Psoas muscle (tissue), 8 donors: ENCODE measurements at regions of chr20 and their contacts with region 1.

Region 1: GRCh38 chr20:32652739-32653526 is 20.8 kb downstream of the C20orf203 start:
- DNase-seq: peak; percentile 80 to 89
- ATAC-seq: peak; percentile 90 to 97 (median 96)
- H3K4me3 ChIP-seq: no peak overlapping the region
- H3K27ac ChIP-seq: no peak overlapping the region
- H3K4me1 ChIP-seq: no peaks in the 10 kb centered on the region
- H3K27me3 ChIP-seq: no peaks in the 10 kb centered on the region
- CTCF ChIP-seq: peak; percentile 94

Region 2: DNA sequence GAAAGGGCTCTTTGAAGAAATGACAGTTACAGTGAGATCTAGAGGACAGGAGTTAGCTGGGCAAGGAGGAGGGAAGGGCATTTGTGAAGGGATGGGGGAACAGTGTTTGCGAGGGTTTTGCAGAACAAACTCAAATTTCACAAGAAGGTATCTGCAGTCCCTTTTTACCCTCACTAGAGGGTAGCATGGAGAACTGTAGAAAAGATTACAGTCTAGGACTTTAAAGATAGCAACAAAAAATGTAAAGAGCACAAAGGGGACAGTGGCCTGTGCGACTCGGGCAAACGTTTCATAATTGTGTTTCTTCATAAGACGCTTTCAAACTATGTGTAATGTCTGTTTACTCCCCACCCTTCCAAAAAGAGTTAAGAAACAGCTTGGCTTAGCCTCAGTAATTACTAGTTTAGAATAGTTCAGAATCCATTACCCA is 316.0 kb before region 1 on chr20:
- intact Hi-C with region 1: no loop called
- DNase-seq: no peak
- ATAC-seq: peak in 3 of 4 donors; percentile 42 to 60 (median 51)
- H3K4me3 ChIP-seq: no peak overlapping the region
- H3K27ac ChIP-seq: no peak overlapping the region
- H3K4me1 ChIP-seq: peaks cover 8% of the 10 kb centered on the region
- H3K27me3 ChIP-seq: no peaks in the 10 kb centered on the region
- CTCF ChIP-seq: peak; percentile 48

Region 3: DNA sequence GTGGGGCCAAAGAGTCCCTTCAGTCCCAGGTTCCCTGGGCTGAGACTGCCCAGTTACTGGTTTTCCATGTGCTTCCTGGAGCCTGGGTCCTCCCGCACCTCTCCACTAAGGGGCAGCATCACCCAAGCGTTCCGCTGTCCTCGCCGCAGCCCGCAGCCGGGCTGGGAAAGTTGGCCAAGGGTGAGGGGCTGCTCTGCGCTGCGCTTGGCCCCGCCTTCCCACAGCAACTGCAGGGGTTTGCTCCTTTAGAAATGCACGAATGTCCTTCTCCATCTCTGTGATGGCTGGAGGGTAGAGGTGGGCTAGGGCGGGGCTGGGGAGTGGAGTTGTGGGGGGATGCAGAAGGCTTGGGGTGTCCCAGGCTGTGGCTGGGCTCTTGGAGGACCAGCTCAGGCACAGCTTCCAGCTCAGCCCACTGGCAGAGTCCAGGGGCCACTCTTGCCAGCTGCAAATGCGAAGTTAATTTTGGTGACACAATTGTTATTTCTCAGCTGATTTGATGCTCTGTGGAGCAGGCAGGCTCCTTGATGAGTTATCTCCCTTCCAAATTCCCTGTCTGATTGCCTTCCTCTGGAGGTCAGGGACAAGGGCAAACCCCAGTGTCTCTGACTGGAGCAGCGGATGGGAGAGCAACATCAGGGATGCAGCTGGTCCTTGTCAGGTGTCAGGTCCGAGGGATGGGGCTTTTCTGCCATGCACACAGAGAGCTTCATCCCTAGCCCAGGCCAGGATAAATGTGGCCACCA is 131.0 kb before region 1 on chr20:
- intact Hi-C with region 1: loop called (anchors 1 to 2 kb)
- DNase-seq: peak; percentile 45 to 82
- ATAC-seq: peak; percentile 80 to 87 (median 82)
- H3K4me3 ChIP-seq: no peak overlapping the region
- H3K27ac ChIP-seq: no peak overlapping the region
- H3K4me1 ChIP-seq: no peaks in the 10 kb centered on the region
- H3K27me3 ChIP-seq: no peaks in the 10 kb centered on the region
- CTCF ChIP-seq: peak; percentile 79